WTC11 (cell line): ENCODE measurements at regions of chr12 and their contacts with region 1.

Region 1: DNA sequence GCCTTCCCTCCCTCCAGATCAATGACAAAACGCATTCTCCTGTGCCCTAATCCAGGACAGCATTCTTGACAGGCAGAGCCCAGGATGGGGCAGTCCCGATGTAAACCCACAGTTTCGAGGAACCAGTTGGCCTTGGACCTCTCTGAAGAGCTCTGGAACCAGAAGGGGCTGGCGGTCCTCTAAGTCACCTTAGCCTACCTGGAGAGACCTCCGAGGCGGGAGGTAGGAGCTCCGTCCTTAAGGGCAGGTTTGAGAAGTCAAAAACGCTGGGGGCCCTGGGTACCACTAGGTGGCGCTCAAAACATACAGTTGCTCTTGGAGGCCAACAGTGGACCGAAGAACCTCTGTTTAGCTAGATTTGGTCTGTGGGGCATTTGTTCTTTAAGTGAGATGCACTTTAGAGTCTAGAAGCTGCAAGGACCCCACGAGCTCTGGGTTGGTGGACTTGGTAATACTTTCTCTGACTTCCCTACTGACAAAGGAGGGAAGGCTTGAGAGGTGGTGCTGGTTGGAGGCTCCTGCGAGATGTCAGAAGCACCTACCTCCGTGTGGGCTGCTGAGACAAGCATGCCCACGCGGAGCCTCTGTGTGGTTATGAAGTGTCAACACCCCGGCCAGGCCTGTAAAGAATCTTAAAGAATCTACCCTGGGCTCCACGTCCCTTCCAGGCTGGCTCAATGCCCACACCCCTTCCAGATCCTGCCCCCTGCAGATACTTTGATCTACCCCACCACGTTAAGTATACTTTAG is 74.8 kb upstream of the CHST11 start:
- DNase-seq: peak; percentile 88
- ATAC-seq: peak; percentile 95
- H3K4me3 Mint-ChIP-seq: peak overlapping the region; percentile 47
- H3K27ac Mint-ChIP-seq: no peak overlapping the region
- H3K4me1 Mint-ChIP-seq: peaks cover 10% of the 10 kb centered on the region
- H3K27me3 Mint-ChIP-seq: no peaks in the 10 kb centered on the region
- CTCF ChIP-seq: peak; percentile 91

Region 2: DNA sequence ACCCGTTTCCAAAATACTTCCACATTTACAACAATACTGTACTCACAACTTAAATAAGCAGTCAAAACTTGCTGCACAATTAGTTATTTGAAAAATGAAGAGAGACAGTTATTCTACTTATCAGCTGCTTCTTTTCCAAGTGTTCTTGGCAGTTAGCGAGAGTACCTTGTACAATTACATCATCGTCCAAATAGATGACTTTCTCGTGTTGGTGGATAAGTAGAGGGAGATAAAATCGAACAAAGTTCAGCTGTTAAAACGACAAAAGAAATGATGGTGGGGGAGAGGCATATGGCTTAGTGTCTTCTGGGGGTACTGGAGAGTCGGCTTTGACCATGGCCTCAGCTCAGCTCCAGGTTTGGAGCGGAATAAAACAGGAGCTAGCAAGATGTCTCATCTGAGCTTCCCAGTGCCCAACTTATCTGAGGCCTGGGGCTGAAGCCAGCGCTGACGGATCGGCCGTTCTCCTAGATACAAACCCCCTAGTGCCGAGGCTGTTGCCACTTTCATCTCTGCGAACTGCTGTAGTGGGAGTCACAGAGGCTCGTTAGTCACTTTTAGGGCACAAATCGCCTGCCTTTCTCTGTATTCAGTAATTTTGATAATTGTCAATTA is 384.5 kb before region 1 on chr12:
- CTCF ChIA-PET with region 1: no interaction called
- POLR2A ChIA-PET with region 1: no interaction called
- DNase-seq: no peak
- ATAC-seq: no peak
- H3K4me3 Mint-ChIP-seq: no peak overlapping the region
- H3K27ac Mint-ChIP-seq: no peak overlapping the region
- H3K4me1 Mint-ChIP-seq: 0 out of 2 replicates have a peak, but pooled peaks cover 3% of the 10 kb centered on the region
- H3K27me3 Mint-ChIP-seq: no peaks in the 10 kb centered on the region; the same call in 1 of the 2 replicates
- CTCF ChIP-seq: no peak

Region 3: GRCh38 chr12:104115587-104115975 is 266.3 kb before region 1 on chr12:
- CTCF ChIA-PET with region 1: no interaction called
- POLR2A ChIA-PET with region 1: no interaction called
- DNase-seq: no peak
- ATAC-seq: no peak
- H3K4me3 Mint-ChIP-seq: no peak overlapping the region
- H3K27ac Mint-ChIP-seq: peak overlapping the region; percentile 35; the same call in 1 of the 2 replicates
- H3K4me1 Mint-ChIP-seq: no peaks in the 10 kb centered on the region
- H3K27me3 Mint-ChIP-seq: no peaks in the 10 kb centered on the region
- CTCF ChIP-seq: no peak

Region 4: GRCh38 chr12:104365921-104366415 is 15.9 kb before region 1 on chr12:
- CTCF ChIA-PET with region 1: interaction called, 11 read pairs
- POLR2A ChIA-PET with region 1: no interaction called
- DNase-seq: no peak
- ATAC-seq: no peak
- H3K4me3 Mint-ChIP-seq: no peak overlapping the region
- H3K27ac Mint-ChIP-seq: no peak overlapping the region; the same call in 1 of the 2 replicates
- H3K4me1 Mint-ChIP-seq: peaks cover 14% of the 10 kb centered on the region
- H3K27me3 Mint-ChIP-seq: peaks cover 3% of the 10 kb centered on the region; the same call in 1 of the 2 replicates
- CTCF ChIP-seq: no peak

Region 5: DNA sequence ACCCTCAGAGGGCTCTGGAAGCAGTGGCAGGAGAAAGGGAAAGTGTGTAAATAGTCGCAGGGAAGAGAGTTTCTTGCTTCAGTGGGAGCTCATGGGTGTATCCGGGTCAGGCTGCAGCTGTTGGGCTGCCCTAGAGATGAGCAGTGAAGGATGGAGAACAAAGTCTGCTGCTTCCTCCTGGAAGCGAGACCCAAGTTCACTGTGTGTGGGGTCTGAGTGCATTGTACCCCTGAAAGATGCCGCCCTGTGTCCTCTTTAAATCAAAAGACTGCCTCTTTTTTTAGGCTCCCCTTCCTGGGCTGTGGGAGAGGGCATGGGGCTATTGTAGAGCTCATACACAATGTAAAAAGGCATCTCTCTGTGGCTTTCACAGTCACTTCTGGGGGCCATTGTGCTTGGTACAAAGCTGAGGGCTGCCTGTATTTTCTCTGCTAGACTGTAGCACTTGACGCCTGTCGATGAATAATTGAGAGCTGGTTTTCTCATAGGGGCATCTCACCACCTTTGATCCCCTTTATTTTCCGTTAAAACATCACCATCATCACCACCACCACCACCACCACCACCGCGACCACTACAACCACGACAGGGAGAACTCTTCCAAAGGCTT is 91.6 kb after region 1 on chr12:
- CTCF ChIA-PET with region 1: interaction called, 10 read pairs
- POLR2A ChIA-PET with region 1: no interaction called
- DNase-seq: no peak
- ATAC-seq: peak; percentile 49
- H3K4me3 Mint-ChIP-seq: no peak overlapping the region
- H3K27ac Mint-ChIP-seq: no peak overlapping the region
- H3K4me1 Mint-ChIP-seq: peaks cover 39% of the 10 kb centered on the region
- H3K27me3 Mint-ChIP-seq: no peaks in the 10 kb centered on the region
- CTCF ChIP-seq: no peak

Region 6: DNA sequence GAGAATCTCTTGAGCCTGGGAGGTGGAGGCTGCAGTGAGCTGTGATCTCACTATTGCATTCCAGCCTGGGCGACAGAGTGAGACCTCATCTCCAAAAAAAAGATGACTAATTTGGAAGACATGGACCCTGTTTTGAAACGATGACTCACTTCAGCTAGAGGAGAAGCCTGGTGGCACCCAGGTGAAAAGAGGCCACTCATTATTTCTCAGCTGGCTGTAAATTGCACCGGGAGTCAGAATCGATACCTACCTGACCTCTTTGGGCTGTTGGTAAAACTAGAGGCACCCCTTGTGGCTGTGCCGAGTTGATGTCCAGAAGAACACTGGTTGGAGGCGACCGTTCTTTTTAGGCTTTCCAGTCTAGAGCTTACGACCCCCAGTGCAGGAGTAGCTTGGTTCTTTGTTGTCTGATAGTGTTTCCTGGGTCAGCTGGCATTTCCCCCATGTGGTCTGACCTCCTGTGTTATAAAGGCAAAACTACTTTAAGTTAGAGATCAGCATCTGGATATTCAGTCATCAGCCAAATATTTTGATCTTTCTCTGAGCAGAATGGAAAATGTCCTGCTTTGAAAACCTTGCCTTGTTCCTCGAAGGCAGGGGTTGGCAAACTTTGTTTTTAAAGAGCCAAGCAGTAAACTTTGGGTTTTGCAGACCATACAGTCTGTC is 168.0 kb after region 1 on chr12:
- CTCF ChIA-PET with region 1: interaction called, 14 read pairs
- POLR2A ChIA-PET with region 1: no interaction called
- DNase-seq: no peak
- ATAC-seq: peak; percentile 60
- H3K4me3 Mint-ChIP-seq: no peak overlapping the region
- H3K27ac Mint-ChIP-seq: no peak overlapping the region
- H3K4me1 Mint-ChIP-seq: peaks cover 14% of the 10 kb centered on the region
- H3K27me3 Mint-ChIP-seq: no peaks in the 10 kb centered on the region
- CTCF ChIP-seq: no peak

Region 7: DNA sequence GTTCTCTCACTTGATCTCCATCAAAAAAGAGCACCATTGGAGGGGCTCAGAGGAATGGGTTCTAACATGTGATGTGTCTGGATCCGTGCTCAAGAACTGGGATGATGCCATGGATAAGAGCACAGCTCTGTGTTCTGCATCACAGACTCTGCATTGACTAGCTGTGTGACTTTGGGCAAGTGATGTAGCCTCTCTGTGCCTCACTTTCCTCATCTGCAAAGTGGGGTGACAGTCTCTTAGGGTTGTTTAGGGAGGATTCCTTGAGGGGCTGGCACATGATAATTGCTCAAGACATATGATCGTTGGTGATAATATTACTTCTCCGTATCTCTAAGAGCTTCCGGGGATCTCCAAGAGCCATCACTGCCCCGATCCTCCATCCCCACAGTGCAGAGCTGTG is 277.2 kb after region 1 on chr12:
- CTCF ChIA-PET with region 1: interaction called, 12 read pairs
- POLR2A ChIA-PET with region 1: no interaction called
- DNase-seq: no peak
- ATAC-seq: no peak
- H3K4me3 Mint-ChIP-seq: no peak overlapping the region
- H3K27ac Mint-ChIP-seq: no peak overlapping the region
- H3K4me1 Mint-ChIP-seq: peaks cover 45% of the 10 kb centered on the region
- H3K27me3 Mint-ChIP-seq: no peaks in the 10 kb centered on the region
- CTCF ChIP-seq: no peak

Region 8: GRCh38 chr12:104748356-104749128 is 366.6 kb after region 1 on chr12:
- CTCF ChIA-PET with region 1: interaction called, 11 read pairs
- POLR2A ChIA-PET with region 1: no interaction called
- DNase-seq: no peak
- ATAC-seq: no peak; the same call in 1 of the 2 replicates
- H3K4me3 Mint-ChIP-seq: no peak overlapping the region
- H3K27ac Mint-ChIP-seq: no peak overlapping the region
- H3K4me1 Mint-ChIP-seq: peaks cover 59% of the 10 kb centered on the region
- H3K27me3 Mint-ChIP-seq: no peaks in the 10 kb centered on the region
- CTCF ChIP-seq: no peak